AG04450 (cell line): ENCODE measurements at regions of chr13 and their contacts with region 1.

Region 1: GRCh38 chr13:99436686-99437416 is 64.4 kb upstream of the TM9SF2 start:
- DNase-seq: peak; percentile 72
- H3K4me3 ChIP-seq: no peak overlapping the region
- H3K27ac ChIP-seq: no peak overlapping the region
- H3K27me3 ChIP-seq: peaks cover 18% of the 10 kb centered on the region
- CTCF ChIP-seq: peak; percentile 100

Region 2: DNA sequence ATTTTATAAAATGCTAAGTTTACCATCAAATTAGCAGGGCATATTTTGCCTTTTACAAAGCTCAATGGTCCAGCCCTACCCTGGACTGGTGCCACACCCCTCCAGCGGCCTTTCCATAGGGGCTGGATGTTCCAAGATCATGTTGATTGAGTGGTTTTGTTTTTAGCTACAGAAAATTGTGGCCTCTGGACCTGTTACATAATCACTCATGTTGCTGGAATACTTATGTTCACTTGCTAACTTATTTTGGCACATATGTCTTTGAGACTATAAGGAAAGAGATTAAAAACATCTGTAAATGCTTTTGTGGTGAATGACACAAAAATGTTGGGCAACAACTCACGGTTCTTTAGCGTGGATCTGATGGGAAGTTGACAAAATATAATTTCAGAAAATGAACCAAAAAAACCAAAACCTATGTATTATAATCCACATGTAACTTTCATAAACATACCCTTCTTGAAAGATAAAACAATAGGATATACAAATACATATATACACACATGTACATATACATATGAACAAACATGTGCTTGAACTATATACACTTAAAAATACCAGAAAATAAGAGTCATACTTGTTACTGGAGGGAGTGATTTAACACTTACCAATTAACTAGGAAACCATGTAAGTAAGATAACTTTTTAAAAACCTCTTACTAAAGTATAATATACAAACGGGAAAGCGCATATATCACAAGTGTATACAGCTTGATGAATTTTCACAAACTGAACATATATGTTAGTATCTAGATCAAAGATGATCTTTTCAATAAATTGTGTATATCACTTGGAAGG is 637.8 kb before region 1 on chr13:
- CTCF ChIA-PET with region 1: no interaction called
- POLR2A ChIA-PET with region 1: no interaction called
- DNase-seq: no peak
- H3K4me3 ChIP-seq: no peak overlapping the region
- H3K27ac ChIP-seq: no peak overlapping the region
- H3K27me3 ChIP-seq: no peaks in the 10 kb centered on the region
- CTCF ChIP-seq: no peak

Region 3: DNA sequence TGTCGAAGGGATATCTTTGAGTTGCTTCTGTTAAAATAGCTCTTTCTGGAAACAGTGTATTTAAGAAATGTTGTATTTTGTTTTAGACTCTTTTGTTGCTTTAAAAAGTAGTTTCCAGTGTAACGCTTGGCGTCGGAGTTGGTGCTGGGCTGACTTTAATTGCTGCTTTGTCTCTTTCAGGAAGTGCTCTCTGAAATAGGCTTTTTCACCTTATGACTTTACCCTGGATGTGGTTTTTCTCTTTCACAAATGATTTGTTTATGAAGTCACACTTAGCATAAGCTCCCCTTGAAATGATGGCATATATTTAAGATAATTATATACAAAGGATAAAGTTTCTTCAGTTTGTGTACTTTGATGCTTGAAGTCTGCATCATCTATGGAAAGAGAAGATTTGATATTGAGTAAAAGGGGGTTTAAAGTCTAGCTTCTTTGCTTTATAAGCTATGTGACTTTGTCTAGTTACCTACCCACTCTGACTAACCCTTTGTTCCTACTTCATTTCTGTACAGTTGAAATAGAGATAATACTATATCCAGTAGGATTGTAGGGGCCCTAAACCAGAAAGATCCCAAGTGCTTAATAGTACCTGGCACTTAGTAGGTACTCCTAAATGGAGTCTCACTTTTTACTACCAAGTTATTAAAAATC is 178.5 kb before region 1 on chr13 and contains the start of gene GPR18:
- CTCF ChIA-PET with region 1: interaction called, 767 read pairs
- POLR2A ChIA-PET with region 1: no interaction called
- DNase-seq: no peak
- H3K4me3 ChIP-seq: no peak within 1 kb of the TSS
- H3K27ac ChIP-seq: no peak within 1 kb of the TSS
- H3K27me3 ChIP-seq: no peaks in the 10 kb centered on the region
- CTCF ChIP-seq: no peak
- polyA plus RNA-seq, gene GPR18: not detected in 2 replicates

Region 4: DNA sequence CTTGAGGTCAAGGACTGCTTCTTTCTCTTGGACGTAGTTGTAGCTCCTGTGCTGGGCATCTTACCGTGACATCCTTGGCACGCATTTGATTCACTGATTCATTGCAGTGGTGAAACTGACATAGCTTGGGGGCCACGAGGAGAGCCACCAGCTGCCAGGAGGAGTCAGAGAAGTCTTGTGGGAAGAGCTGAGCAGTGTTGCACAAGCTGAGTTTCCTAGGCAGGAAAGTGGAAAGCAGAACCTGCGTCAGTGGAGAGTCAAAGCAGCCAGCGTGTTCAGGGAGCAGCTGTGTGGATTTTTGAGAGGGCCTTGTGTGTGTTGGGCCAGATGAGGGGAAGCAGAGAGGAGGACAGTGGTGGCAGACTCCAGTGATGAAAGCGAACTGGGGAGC is 124.4 kb before region 1 on chr13:
- CTCF ChIA-PET with region 1: interaction called, 12 read pairs
- POLR2A ChIA-PET with region 1: no interaction called
- DNase-seq: no peak
- H3K4me3 ChIP-seq: no peak overlapping the region
- H3K27ac ChIP-seq: no peak overlapping the region
- H3K27me3 ChIP-seq: no peaks in the 10 kb centered on the region
- CTCF ChIP-seq: no peak

Region 5: DNA sequence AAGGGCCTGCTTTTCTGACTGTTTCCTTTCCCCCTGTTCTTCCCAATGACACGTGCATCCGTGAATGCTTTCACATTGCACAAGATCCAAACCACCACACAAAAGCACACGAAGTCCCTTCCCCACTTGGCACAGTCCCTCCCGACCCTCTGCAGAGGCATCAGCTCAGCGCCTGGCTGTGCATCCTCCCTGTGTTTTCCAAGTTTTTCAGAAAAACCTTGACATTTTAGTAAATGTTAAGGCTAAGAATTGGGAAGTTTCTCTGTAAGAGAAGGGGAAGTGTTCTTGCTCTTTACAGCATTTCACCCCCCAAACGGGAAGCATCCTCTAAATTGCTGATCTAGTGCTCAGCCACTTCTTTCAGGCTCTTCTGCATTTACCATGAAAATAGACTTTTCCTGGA is 30.1 kb before region 1 on chr13:
- CTCF ChIA-PET with region 1: interaction called, 11 read pairs
- POLR2A ChIA-PET with region 1: no interaction called
- DNase-seq: no peak
- H3K4me3 ChIP-seq: no peak overlapping the region
- H3K27ac ChIP-seq: no peak overlapping the region
- H3K27me3 ChIP-seq: peaks cover 10% of the 10 kb centered on the region
- CTCF ChIP-seq: no peak

Region 6: DNA sequence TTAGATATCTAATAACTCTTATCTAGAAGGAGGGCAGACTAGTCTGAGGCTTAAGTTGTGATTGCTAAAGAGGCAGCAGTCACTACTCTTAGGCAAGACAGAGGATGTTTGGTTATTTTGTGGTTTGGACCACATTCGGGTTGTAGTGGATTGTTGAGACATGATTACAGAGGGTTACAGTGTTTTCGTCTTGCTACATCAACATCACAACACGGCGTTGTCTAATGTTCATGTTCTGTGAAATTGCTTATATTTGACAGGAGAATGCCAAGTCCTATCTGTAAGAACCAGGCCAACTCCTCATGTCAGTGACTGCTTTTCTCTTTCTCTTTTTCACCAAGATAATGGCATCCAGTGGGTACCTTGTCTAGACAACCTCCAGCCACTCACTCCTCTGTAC is 47.6 kb after region 1 on chr13:
- CTCF ChIA-PET with region 1: interaction called, 17 read pairs
- POLR2A ChIA-PET with region 1: no interaction called
- DNase-seq: peak; percentile 58
- H3K4me3 ChIP-seq: no peak overlapping the region
- H3K27ac ChIP-seq: no peak overlapping the region
- H3K27me3 ChIP-seq: peaks cover 9% of the 10 kb centered on the region
- CTCF ChIP-seq: no peak

Region 7: GRCh38 chr13:99617474-99618255 is 180.8 kb after region 1 on chr13:
- CTCF ChIA-PET with region 1: no interaction called
- POLR2A ChIA-PET with region 1: no interaction called
- DNase-seq: no peak
- H3K4me3 ChIP-seq: no peak overlapping the region
- H3K27ac ChIP-seq: no peak overlapping the region
- H3K27me3 ChIP-seq: peaks cover 2% of the 10 kb centered on the region
- CTCF ChIP-seq: peak; percentile 72